Endothelial cell of umbilical vein (primary cell): ENCODE measurements at regions of chr17 and their contacts with region 1.

Region 1: DNA sequence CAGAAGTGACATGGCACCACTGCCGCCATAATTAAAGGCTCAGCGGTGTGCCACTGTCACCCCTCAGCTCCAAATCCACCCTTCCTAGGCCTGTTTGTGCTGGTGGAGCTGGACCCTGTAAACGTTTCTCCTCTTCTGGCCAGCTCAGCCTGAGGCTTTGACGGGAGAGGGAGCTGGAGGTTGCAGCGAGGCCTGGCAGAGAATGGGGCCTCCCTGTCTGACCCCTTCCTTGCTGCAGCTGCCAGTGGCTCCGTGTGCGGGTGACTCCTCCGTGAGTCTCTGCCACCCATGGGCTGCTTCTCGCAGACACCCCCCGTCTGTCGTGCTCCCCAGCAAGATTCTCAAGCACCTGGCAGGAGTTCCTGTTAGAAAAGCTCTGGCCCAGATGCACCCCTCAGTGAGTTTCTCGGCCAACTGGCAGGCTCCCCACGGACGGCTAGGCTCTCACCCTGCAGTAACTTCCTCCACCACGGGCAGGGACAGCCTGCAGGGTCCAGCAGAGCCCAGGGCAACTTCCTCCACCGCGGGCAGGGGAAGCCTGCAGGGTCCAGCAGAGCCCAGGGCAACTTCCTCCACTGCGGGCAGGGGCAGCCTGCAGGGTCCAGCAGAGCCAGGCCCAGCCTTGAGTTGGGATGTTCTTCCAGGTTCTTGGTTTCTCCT is 4.7 kb upstream of the CHMP6 start:
- DNase-seq: no peak
- H3K4me3 ChIP-seq: no peak overlapping the region
- H3K27ac ChIP-seq: no peak overlapping the region
- H3K4me1 ChIP-seq: no peaks in the 10 kb centered on the region
- H3K27me3 ChIP-seq: no peaks in the 10 kb centered on the region
- CTCF ChIP-seq: no peak
- POLR2A ChIP-seq: no peak

Region 2: GRCh38 chr17:81058263-81058898 is 71.4 kb after region 1 on chr17:
- CTCF ChIA-PET with region 1: no interaction called
- POLR2A ChIA-PET with region 1: no interaction called
- dilution Hi-C with region 1: no loop called
- intact Hi-C with region 1: no loop called
- DNase-seq: no peak
- H3K4me3 ChIP-seq: no peak overlapping the region
- H3K27ac ChIP-seq: no peak overlapping the region
- H3K4me1 ChIP-seq: no peaks in the 10 kb centered on the region
- H3K27me3 ChIP-seq: no peaks in the 10 kb centered on the region
- CTCF ChIP-seq: no peak
- POLR2A ChIP-seq: no peak

Region 3: DNA sequence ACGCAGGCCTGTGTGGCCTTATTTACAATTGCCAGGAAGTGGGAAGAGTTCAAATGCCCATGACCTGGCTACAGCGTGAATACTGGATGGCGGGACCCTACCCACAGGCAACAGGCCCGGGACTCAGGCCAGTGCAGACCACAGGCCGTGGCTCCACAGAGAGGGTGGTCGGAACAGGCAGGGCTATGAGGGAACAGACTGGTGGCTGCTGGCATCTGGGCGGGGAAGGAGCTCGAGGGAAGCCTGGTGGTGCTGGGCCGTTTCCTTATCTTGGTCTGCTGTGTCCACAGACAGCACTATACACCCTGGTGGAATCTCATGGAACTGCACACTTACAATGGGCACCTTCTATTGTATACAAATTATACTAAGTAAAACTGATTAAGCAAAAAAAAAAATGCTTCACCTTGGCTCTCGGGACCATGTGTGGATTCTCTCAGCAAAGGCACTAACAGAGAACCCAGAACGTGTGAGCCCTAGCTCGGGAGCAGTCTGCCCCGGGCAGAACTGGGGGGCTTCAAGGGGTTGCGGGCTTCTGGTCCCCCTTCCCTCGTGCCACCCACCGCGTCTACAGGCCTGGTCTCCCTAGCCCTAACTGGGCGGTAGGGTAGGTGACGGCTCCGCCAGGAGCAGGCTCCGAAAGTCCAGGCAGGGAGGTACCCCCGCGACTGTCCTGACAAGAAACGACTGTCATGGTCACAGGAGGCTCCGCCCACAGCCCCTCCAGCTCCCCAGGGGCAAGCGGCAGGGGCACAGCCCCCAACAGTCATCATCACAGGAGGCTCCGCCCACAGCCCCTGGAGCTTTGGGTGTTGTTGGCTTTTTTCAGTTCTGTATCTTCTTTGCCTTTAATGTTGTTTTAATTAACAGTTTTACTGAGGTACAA is 214.0 kb after region 1 on chr17:
- CTCF ChIA-PET with region 1: interaction called, 13 read pairs
- POLR2A ChIA-PET with region 1: no interaction called
- dilution Hi-C with region 1: no loop called
- intact Hi-C with region 1: no loop called
- DNase-seq: peak; percentile 76
- H3K4me3 ChIP-seq: no peak overlapping the region
- H3K27ac ChIP-seq: no peak overlapping the region
- H3K4me1 ChIP-seq: no peaks in the 10 kb centered on the region
- H3K27me3 ChIP-seq: no peaks in the 10 kb centered on the region
- CTCF ChIP-seq: peak; percentile 63 to 73
- POLR2A ChIP-seq: no peak